ENCODE measurements at regions of chr2 and their contacts with region 1.

Region 1: DNA sequence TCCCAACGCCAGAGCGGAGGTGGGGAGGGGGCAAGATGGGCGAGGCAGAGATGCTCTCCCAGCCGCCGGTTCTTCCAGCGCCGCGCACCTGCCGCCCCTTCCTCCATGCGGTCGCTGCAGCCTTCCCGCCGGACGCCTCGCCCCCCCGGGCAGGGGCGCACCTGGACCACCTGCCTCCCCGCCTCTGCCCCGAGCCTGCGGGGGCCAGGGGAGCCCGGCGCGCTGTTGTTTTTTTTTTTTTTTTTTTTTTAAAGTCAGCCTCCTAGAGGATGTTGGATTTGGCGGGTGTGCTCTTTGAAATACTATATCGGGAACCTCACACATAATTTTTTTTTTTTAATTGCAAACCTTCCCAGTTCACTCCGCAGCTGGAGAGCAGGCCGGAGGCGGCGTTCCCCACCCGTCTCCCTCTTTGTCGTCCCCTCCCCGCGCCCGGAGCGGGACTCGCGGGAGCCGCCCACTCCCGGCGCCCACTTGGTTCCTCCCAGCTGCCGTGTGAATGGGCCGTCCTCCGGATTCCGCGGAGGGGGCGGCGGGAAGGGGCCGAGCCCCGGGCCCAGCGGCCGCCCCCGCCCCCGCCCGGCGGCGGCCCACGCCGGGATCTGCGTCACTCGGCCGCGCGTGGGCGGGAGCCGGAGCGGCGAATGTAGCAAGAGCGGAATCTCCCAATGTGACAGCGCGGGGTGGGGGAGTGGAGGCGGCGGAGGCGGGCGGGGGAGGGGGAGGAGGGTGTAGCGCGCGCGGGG is 421 bp upstream of the NAB1 start:
- DNase-seq: peak; percentile 82 to 98 (median 89)
- ATAC-seq: peak; percentile 77
- H3K4me3 ChIP-seq: peak overlapping the region; percentile 71
- H3K4me3 Mint-ChIP-seq: peak overlapping the region; percentile 92
- H3K27ac ChIP-seq: peak overlapping the region; percentile 83
- H3K27ac Mint-ChIP-seq: peak overlapping the region; percentile 93
- H3K4me1 ChIP-seq: peaks cover 20% of the 10 kb centered on the region
- H3K4me1 Mint-ChIP-seq: peaks cover 57% of the 10 kb centered on the region
- H3K27me3 ChIP-seq: no peaks in the 10 kb centered on the region
- H3K27me3 Mint-ChIP-seq: no peaks in the 10 kb centered on the region
- CTCF ChIP-seq: no peak

Region 2: DNA sequence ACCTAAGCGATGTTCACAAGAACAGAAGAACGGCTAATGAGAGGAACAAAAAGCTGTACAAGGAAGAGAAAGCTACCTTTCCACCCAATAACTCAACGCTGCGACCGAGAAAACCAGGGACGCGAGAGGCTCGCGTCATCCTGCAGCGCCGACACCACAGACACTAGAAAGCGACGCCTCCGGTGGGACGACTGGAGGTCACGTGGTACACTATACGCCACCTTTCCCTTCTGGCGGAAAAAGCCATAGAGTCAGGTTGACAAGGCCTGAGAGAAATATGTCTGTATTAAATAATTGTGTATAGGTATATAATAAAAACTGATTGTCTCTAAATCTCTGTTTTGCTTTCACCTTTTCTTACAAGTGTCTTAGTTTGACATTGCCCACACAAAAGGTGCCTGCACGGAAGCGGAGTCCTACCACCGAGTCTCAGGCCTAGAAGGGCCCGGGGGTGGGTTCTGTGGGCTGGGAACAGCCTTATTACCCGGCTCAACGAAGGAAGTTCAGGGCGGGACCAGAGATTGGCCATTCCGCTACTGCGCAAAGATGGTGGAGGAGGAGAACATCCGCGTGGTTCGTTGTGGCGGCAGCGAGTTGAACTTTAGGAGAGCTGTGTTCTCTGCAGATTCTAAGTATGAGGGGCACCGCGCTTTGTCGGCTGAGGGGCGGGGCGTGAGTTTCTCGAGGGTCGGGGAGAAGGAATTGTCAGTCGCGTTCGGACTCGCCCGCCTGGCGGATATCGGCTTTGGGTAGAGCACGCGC is 1207.3 kb before region 1 on chr2 and contains the start of gene WDR75:
- CTCF ChIA-PET with region 1: no interaction called
- POLR2A ChIA-PET with region 1: no interaction called
- intact Hi-C with region 1: loop called in 1 of 2 experiments (anchors 10 kb)
- DNase-seq: peak; percentile 85 to 96 (median 90)
- ATAC-seq: peak; percentile 93
- H3K4me3 ChIP-seq: peak within 1 kb of the TSS; percentile 78
- H3K4me3 Mint-ChIP-seq: no peak within 1 kb of the TSS
- H3K27ac ChIP-seq: peak within 1 kb of the TSS; percentile 90 to 97
- H3K27ac Mint-ChIP-seq: peak within 1 kb of the TSS; percentile 97
- H3K4me1 ChIP-seq: peaks cover 21% of the 10 kb centered on the region
- H3K4me1 Mint-ChIP-seq: peaks cover 16% of the 10 kb centered on the region
- H3K27me3 ChIP-seq: no peaks in the 10 kb centered on the region
- H3K27me3 Mint-ChIP-seq: no peaks in the 10 kb centered on the region
- CTCF ChIP-seq: no peak
- total RNA-seq, gene WDR75: 38.1 to 45.3 TPM

Region 3: DNA sequence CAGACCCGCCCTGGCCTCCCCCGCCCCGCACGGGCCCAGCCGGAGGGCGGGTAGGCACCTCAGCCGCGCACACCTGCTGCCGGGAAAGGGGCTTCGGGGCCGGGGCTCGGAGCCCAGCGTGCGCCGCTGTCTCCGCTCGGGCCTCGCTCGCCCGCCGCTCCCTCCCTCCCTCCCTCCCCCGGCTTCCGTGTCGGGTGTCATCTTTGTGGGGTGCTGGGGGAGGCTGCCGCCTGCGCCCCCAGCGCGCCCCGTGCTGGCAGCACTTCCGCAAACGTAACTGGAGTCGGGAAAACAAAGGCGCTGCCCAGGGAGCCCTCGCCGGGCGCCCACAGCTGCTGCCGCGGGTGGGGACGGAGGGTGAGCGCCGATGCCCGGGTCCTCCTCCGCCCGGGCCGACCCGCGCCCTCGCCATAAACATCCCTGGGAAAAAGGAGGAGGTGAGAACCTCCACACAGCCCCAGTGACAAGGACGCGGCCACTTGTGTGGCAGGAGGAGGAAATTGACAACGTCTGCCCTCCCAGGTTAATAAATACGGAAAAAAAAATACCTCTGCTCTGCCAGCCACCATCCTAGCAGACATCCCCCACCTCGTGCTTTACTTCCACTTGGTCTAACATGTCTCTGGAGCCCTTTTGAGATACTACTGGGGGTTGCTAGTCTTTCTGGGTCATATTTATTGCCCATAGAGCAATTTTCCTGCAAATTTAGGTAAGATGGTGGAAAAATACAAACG is 239.8 kb before region 1 on chr2:
- CTCF ChIA-PET with region 1: no interaction called
- POLR2A ChIA-PET with region 1: interaction called, 10 read pairs
- intact Hi-C with region 1: loop called (anchors 2 kb)
- DNase-seq: peak; percentile 61 to 91 (median 72)
- ATAC-seq: peak; percentile 49
- H3K4me3 ChIP-seq: peak overlapping the region; percentile 79
- H3K4me3 Mint-ChIP-seq: peak overlapping the region; percentile 94
- H3K27ac ChIP-seq: peak overlapping the region; percentile 95 to 99
- H3K27ac Mint-ChIP-seq: peak overlapping the region; percentile 97
- H3K4me1 ChIP-seq: peaks cover 40% of the 10 kb centered on the region
- H3K4me1 Mint-ChIP-seq: peaks cover 45% of the 10 kb centered on the region
- H3K27me3 ChIP-seq: no peaks in the 10 kb centered on the region
- H3K27me3 Mint-ChIP-seq: no peaks in the 10 kb centered on the region
- CTCF ChIP-seq: no peak

Region 4: GRCh38 chr2:190627448-190628412 is 20.7 kb before region 1 on chr2:
- CTCF ChIA-PET with region 1: no interaction called
- POLR2A ChIA-PET with region 1: interaction called, 3 read pairs
- intact Hi-C with region 1: loop called in 1 of 2 experiments (anchors 2 kb)
- DNase-seq: peak in 5 of 14 experiments; percentile 23 to 54 (median 38)
- ATAC-seq: peak; percentile 86
- H3K4me3 ChIP-seq: peak overlapping the region; percentile 60
- H3K4me3 Mint-ChIP-seq: peak overlapping the region; percentile 97
- H3K27ac ChIP-seq: no peak overlapping the region
- H3K27ac Mint-ChIP-seq: peak overlapping the region; percentile 80
- H3K4me1 ChIP-seq: peaks cover 8% of the 10 kb centered on the region
- H3K4me1 Mint-ChIP-seq: peaks cover 41% of the 10 kb centered on the region
- H3K27me3 ChIP-seq: no peaks in the 10 kb centered on the region
- H3K27me3 Mint-ChIP-seq: no peaks in the 10 kb centered on the region
- CTCF ChIP-seq: no peak

Region 5: GRCh38 chr2:190679813-190680591 is 31.5 kb after region 1 on chr2:
- CTCF ChIA-PET with region 1: interaction called, 30 read pairs
- POLR2A ChIA-PET with region 1: interaction called, 11 read pairs
- intact Hi-C with region 1: loop called in 1 of 2 experiments (anchors 2 kb)
- DNase-seq: peak; percentile 33 to 81 (median 56)
- ATAC-seq: peak; percentile 73
- H3K4me3 ChIP-seq: no peak overlapping the region
- H3K4me3 Mint-ChIP-seq: no peak overlapping the region
- H3K27ac ChIP-seq: no peak overlapping the region
- H3K27ac Mint-ChIP-seq: peak overlapping the region; percentile 69
- H3K4me1 ChIP-seq: peaks cover 16% of the 10 kb centered on the region
- H3K4me1 Mint-ChIP-seq: peaks cover 46% of the 10 kb centered on the region
- H3K27me3 ChIP-seq: no peaks in the 10 kb centered on the region
- H3K27me3 Mint-ChIP-seq: no peaks in the 10 kb centered on the region
- CTCF ChIP-seq: peak; percentile 74

Region 6: DNA sequence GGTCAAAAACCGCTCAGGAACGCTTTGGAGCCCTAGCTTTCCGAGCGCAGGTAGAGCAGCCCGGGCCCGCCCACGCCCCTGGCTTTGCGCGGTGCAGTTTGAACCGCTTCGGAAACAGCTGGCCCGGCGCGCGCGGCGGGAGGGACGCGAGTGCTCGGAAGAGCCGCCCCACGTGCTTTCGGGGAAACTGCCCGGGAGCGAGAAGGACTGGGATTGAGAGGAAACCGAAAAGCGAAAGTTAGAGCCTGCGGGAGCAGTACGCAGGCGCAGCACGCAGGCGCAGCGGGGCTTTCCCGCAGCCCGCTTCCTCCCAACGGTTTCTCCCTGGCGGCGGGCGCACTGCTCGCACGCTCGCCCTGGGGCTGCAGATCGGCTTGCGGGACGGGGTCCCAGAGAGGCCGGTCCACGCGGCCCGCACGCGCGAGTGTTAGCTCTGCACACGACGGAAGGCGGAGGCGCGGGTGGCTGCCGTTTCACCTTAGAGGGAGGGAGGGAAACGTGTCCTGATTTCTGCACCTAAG is 371.8 kb after region 1 on chr2:
- CTCF ChIA-PET with region 1: no interaction called
- POLR2A ChIA-PET with region 1: interaction called, 3 read pairs
- intact Hi-C with region 1: loop called in 1 of 2 experiments (anchors 5 kb)
- DNase-seq: peak; percentile 84 to 98 (median 92)
- ATAC-seq: peak; percentile 73
- H3K4me3 ChIP-seq: peak overlapping the region; percentile 82
- H3K4me3 Mint-ChIP-seq: no peak overlapping the region
- H3K27ac ChIP-seq: peak overlapping the region; percentile 84 to 87
- H3K27ac Mint-ChIP-seq: no peak overlapping the region
- H3K4me1 ChIP-seq: peaks cover 54% of the 10 kb centered on the region
- H3K4me1 Mint-ChIP-seq: peaks cover 32% of the 10 kb centered on the region
- H3K27me3 ChIP-seq: no peaks in the 10 kb centered on the region
- H3K27me3 Mint-ChIP-seq: no peaks in the 10 kb centered on the region
- CTCF ChIP-seq: no peak